ENCODE measurements at regions of chr20 and their contacts with region 1.

Region 1: DNA sequence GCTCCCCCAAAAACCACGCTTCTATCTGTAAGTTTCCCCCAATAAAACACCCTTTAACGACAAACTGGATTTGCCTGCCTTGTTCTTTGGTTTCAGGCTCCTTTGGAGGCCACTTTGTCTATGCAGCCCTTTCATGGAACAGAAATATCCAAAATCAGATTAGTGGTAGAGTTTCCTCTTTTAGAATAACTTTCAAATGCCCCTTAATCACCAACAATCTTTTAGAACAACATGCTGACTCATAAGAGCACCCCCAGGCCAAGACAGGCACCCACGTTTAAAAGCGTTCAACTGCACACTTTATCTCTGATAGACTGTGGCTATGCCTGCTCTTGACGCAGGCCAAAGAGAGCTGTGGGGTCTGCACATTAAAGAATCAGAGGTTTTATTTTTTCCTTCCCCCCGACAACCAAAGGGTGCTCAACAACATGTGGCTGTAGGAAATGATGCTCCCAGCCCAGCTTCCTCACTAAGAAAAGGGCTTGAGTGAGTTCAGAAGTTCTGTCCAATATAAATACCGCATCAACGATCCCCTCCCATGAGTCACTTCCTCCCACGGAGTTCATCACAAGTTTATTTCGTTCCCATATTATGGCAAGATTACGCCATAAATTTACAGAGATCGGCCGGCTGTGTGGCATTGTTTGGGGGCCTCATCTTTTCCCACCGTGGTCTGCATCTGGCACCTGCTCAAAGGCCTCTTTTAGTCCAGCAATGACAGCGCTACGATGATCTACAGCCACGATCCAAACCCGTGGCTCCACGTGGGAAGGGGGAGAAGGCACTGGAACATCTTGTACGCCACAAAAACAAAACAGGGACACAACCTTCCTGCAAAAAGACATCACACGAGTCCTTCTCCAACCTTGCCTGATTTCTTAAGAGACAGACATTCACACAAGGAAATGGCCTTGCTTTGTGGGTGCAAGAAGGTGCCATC is 88.8 kb upstream of the NFATC2 start:
- DNase-seq: peak; percentile 100
- H3K4me3 ChIP-seq: no peak overlapping the region
- H3K27ac ChIP-seq: peak overlapping the region; percentile 99
- H3K4me1 ChIP-seq: peaks cover 38% of the 10 kb centered on the region
- H3K27me3 ChIP-seq: no peaks in the 10 kb centered on the region
- CTCF ChIP-seq: no peak
- POLR2A ChIP-seq: peak; percentile 55

Region 2: DNA sequence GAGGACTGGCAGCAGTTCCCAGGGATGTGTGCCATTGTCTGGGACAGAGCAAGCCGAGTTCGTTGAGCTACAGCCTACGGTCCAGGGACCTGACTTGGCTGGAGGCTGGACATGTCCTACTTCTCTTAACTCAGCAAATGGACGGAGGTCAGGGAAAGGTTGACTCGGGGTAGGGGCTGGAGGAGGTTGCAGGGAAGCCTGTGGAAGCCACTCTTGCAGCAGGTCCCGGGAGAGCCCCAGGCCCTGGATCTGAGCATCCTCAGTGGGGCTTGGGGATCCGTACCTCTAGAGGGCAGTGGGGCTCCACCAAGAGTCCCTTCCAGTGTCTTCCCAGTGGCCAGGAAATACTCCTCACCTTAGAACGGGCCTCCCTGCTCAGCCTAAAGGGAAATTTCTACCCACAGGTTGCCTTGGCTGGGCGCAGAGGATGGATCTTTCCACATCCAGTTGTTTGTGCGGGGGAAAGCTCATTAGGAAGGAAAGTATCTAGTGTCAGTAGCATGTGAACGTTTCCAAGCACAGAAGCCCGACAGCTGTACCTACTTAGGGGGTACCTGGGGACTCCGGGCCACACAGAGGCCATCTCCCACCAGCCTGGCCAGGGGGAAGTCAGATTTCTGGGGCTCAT is 259.0 kb before region 1 on chr20:
- CTCF ChIA-PET with region 1: interaction called, 50 read pairs
- POLR2A ChIA-PET with region 1: no interaction called
- dilution Hi-C with region 1: no loop called
- intact Hi-C with region 1: loop called (anchors 1 kb)
- DNase-seq: peak; percentile 73
- H3K4me3 ChIP-seq: no peak overlapping the region
- H3K27ac ChIP-seq: no peak overlapping the region
- H3K4me1 ChIP-seq: peaks cover 26% of the 10 kb centered on the region
- H3K27me3 ChIP-seq: no peaks in the 10 kb centered on the region
- CTCF ChIP-seq: peak; percentile 84 to 93
- POLR2A ChIP-seq: no peak

Region 3: GRCh38 chr20:51562332-51563155 is 68.7 kb before region 1 on chr20:
- CTCF ChIA-PET with region 1: no interaction called
- POLR2A ChIA-PET with region 1: no interaction called
- dilution Hi-C with region 1: no loop called
- intact Hi-C with region 1: loop called (anchors 1 kb)
- DNase-seq: peak; percentile 98
- H3K4me3 ChIP-seq: peak overlapping the region; percentile 40 to 62 (median 54)
- H3K27ac ChIP-seq: peak overlapping the region; percentile 64
- H3K4me1 ChIP-seq: peaks cover 24% of the 10 kb centered on the region
- H3K27me3 ChIP-seq: peaks cover 1 to 2% of the 10 kb centered on the region in 2 experiments
- CTCF ChIP-seq: peak; percentile 12
- POLR2A ChIP-seq: no peak

Region 4: GRCh38 chr20:51750037-51750763 is 118.9 kb after region 1 on chr20:
- CTCF ChIA-PET with region 1: no interaction called
- POLR2A ChIA-PET with region 1: no interaction called
- dilution Hi-C with region 1: no loop called
- intact Hi-C with region 1: loop called (anchors 2 kb)
- DNase-seq: peak; percentile 94
- H3K4me3 ChIP-seq: no peak overlapping the region
- H3K27ac ChIP-seq: peak overlapping the region; percentile 52
- H3K4me1 ChIP-seq: peaks cover 37% of the 10 kb centered on the region
- H3K27me3 ChIP-seq: no peaks in the 10 kb centered on the region
- CTCF ChIP-seq: no peak
- POLR2A ChIP-seq: no peak

Region 5: DNA sequence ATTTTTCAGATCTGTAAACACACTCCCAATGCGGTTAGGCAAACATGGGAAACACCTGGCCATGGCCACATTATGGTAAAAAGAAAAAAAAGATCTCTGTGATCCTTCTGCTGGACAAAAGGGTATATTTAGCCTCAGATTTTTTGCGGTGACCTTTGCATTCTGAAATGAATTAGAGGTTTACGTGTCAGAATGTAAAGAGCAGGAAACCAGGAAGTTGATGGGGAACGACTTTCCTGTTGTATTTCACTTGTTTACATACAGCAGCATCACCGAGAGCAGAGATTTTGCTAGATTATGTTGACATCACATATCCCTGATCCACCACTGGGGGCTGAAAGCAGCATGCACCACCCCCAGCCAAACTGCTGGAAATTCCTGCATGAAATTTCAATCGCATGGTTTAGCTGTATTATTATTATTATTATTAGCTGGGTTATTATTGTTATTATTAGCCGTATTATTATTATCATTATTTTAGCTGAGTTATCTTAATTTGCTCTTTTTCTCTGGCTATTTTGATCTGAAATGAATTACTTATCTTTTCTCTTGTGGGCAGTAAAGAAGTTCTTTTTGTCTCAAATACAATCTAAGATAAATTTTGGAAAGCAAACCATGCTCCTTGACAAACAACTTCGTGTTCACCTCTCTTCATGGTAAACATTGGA is 370.9 kb after region 1 on chr20:
- CTCF ChIA-PET with region 1: no interaction called
- POLR2A ChIA-PET with region 1: no interaction called
- dilution Hi-C with region 1: no loop called
- intact Hi-C with region 1: loop called (anchors 1 kb)
- DNase-seq: peak; percentile 93
- H3K4me3 ChIP-seq: no peak overlapping the region
- H3K27ac ChIP-seq: peak overlapping the region; percentile 85
- H3K4me1 ChIP-seq: peaks cover 17% of the 10 kb centered on the region
- H3K27me3 ChIP-seq: no peaks in the 10 kb centered on the region
- CTCF ChIP-seq: peak; percentile 34 to 49
- POLR2A ChIP-seq: no peak

Region 6: DNA sequence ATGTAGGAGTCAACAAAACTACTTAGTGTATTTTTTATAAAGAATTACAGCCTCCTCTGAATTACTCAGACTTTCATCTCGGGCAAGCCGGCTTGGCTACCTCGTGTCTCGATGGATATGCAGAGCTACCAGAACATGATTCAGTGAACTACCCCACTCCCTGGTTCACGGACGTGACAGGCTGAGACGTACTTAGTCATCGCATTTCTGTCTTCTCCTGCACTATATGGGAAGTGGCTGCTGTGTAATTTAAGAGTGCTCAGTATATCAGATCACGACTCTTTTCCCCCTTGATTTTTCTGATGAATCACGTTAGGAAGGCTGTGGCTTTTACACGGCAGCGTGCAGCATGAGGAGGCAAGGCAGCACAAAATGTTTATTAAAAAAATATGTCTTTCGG is 863.0 kb after region 1 on chr20:
- CTCF ChIA-PET with region 1: no interaction called
- POLR2A ChIA-PET with region 1: no interaction called
- dilution Hi-C with region 1: no loop called
- intact Hi-C with region 1: loop called (anchors 5 kb)
- DNase-seq: peak; percentile 94
- H3K4me3 ChIP-seq: peak overlapping the region in 1 of 3 experiments; percentile 66
- H3K27ac ChIP-seq: peak overlapping the region; percentile 100
- H3K4me1 ChIP-seq: peaks cover 47% of the 10 kb centered on the region
- H3K27me3 ChIP-seq: no peaks in the 10 kb centered on the region
- CTCF ChIP-seq: no peak
- POLR2A ChIP-seq: peak; percentile 37